ENCODE measurements at regions of chr3 and their contacts with region 1.

Region 1: DNA sequence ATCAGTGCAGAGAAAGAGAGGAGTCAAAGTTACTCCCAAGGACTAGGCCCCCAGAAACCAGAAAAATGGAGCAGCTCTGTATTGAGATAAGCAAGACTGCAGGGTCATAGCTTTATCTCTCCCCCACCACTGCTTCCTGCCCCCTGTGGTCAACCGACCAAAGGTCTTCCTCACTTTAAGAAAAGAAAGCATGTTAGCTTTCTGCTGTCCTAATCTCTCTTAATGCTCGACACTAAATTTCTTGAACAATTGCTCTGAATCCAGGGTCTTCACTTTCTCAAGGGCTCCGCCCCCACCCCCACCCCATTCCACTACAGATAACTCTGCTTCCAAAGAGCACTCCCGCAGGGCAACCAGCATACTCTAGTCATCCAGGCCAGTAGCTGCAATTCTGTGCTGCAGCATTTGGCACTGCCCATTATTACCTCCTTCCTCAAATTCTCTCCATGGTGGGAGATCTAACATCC is 31.9 kb downstream of the TNIK start:
- DNase-seq: no peak
- H3K4me3 ChIP-seq: peak overlapping the region in 2 of 4 experiments; percentile 3 to 7; a peak in 2 of 8 replicates
- H3K27ac ChIP-seq: peak overlapping the region; percentile 0; the same call in 1 of the 2 replicates
- H3K4me1 ChIP-seq: peaks cover 14 to 30% (median 21%) of the 10 kb centered on the region in 4 experiments
- H3K27me3 ChIP-seq: no peaks in the 10 kb centered on the region
- CTCF ChIP-seq: no peak
- EP300 ChIP-seq: no peak
- POLR2A ChIP-seq: no peak
- RAD21 ChIP-seq: no peak

Region 2: DNA sequence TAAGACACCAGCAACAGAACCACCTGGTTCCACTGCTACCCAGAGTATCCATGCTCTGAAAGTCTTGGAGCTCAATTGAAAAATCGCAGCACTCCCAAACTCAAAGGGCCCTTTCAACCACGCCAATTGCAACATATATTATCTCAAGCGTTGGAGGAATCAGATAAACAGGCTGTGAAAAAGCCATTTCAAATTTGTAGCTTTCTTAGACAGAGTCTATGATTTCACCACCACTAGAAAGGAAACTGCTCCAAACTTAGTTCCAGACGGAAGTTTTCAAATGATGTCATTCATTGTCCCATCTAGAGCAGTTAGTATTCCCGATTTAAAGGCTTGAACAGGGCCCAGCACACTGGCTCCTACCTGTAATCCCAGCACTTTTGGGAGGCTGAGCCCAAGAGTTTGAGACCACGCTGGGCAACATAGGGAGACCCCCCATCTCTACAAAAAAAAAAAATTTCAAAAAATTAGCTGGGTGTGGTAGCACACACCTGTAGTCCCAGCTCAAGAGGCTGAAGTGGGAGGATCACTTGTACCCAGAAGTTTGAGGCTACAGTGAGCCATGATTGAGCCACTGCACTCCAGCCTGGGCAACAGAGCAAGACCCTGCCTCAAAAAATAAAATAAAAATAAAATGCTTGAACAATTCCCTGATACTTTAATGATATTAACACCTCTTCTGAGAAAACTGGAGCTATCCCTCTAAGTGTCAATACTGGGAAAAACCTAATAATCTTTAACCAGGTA is 15.0 kb after region 1 on chr3:
- CTCF ChIA-PET with region 1: interaction called, 6 read pairs
- POLR2A ChIA-PET with region 1: interaction called, 19 read pairs
- DNase-seq: no peak
- H3K4me3 ChIP-seq: no peak overlapping the region
- H3K27ac ChIP-seq: 0 out of 2 replicates have a peak overlapping the region, but pooled peaks have one; percentile 5
- H3K4me1 ChIP-seq: peaks cover 0 to 18% (median 16%) of the 10 kb centered on the region in 4 experiments
- H3K27me3 ChIP-seq: no peaks in the 10 kb centered on the region
- CTCF ChIP-seq: no peak
- EP300 ChIP-seq: no peak
- POLR2A ChIP-seq: no peak
- RAD21 ChIP-seq: no peak

Region 3: DNA sequence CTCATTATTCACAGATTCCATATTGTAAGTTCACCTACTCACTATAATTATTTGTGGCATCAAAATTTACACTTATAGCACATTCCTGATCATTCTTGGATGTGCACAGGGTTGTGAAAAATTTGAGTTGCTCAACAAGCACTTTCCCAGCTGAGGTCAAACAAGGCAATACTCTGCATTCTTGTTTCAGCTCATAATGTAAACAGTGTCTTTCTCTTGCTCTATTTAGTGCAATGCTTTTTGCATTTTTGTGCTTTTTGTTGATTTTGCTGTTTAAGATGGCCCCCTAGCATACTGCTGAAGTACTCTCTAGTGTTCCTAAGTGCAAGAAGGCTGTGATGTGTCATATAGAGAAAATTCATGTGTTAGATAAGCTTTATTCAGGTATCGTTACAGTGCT is 98.5 kb after region 1 on chr3:
- CTCF ChIA-PET with region 1: no interaction called
- POLR2A ChIA-PET with region 1: no interaction called
- DNase-seq: no peak
- H3K4me3 ChIP-seq: no peak overlapping the region
- H3K27ac ChIP-seq: no peak overlapping the region
- H3K4me1 ChIP-seq: peaks cover 0 to 6% (median 0%) of the 10 kb centered on the region in 4 experiments; a peak in 1 of 7 replicates
- H3K27me3 ChIP-seq: no peaks in the 10 kb centered on the region
- CTCF ChIP-seq: no peak
- EP300 ChIP-seq: no peak
- POLR2A ChIP-seq: no peak
- RAD21 ChIP-seq: no peak